Left cardiac atrium (tissue), 4 donors: ENCODE measurements at regions of chr12 and their contacts with region 1.

Region 1: DNA sequence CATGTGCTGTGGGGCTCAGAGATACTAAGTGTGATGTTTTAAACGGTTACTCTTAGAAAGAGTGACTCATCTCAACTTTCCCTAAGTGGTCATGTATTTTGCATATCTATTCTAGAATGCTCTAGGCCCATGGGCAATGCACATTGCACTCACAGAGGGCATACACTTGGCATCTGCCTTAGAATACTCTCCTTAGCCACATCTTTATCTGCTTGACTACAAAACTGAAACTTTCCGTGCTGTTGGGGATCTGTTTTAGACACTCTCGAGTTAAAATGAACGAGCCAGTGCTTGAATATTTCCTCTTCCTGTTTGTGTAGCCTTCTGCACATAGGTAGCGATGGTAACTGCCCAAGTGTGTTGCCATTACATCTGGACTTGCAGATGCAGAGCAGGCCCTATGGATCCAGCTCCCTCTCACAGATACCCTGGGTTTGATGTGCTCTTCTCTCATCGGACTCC is 180.5 kb downstream of the CAND1 start:
- DNase-seq: no peak
- ATAC-seq: peak in 1 of 2 donors; percentile 19

Region 2: DNA sequence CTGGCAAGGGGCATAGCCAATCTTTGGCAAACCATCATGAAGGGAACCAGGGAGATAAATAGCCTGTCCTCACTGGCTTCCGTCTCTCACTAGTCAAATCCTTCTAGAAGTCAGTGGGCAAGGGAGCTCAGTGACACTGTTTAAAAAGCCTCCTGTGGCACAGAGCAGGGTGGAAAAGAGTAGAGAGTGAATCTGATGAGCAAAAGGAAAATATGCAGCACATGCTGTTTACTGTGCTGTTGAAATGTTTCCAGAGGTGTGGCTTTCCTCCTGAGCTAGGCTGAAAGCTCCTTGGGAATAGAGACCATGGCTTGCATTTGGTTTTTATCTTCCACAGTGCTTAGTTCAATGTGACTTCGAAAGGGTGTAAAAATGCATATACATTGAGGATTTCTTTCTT is 191.2 kb after region 1 on chr12:
- intact Hi-C with region 1: loop called in 1 of 2 experiments (anchors 5 kb)
- DNase-seq: no peak
- ATAC-seq: no peak